HCT116 (cell line): ENCODE measurements at regions of chr20 and their contacts with region 1.

Region 1: GRCh38 chr20:5126512-5127203 is at the start of gene CDS2:
- DNase-seq: peak; percentile 97
- ATAC-seq: peak; percentile 90
- H3K4me3 ChIP-seq: peak within 1 kb of the TSS; percentile 64 to 87
- H3K27ac ChIP-seq: peak within 1 kb of the TSS; percentile 81
- H3K4me1 ChIP-seq: peaks cover 7 to 15% of the 10 kb centered on the region in 2 experiments; a peak in 3 of 4 replicates
- H3K27me3 ChIP-seq: no peaks in the 10 kb centered on the region
- CTCF ChIP-seq: peak; percentile 47 to 73 (median 49)
- POLR2A ChIP-seq: no peak
- RAD21 ChIP-seq: peak; percentile 72
- total RNA-seq, gene CDS2: 37.5 TPM

Region 2: DNA sequence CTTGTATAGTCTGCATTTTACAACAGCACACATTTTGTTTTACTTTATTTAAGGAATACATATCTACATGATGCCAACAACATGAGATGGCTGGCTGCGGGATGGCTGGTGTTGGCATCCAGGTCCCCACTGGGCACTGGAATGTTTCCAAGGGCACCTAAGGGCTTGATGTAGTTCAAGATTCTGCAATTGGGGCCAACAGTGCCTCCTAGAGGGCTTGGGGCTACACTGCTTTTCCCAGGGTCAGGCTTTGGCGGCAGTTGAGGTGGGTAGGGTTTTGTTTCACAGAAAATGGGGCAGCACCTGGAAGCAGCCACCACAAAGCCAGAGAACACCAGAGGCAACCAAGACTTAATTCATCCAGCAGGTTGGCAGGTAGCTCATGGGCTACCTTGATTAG is 607.1 kb before region 1 on chr20:
- CTCF ChIA-PET with region 1: no interaction called
- POLR2A ChIA-PET with region 1: no interaction called
- RAD21 ChIA-PET with region 1: no interaction called
- intact Hi-C with region 1: no loop called
- DNase-seq: no peak
- ATAC-seq: peak; percentile 85
- H3K4me3 ChIP-seq: no peak overlapping the region
- H3K27ac ChIP-seq: no peak overlapping the region
- H3K4me1 ChIP-seq: peaks cover 5 to 7% of the 10 kb centered on the region in 2 experiments
- H3K27me3 ChIP-seq: peaks cover 11% of the 10 kb centered on the region; the same call in 1 of the 2 replicates
- CTCF ChIP-seq: peak; percentile 36 to 78 (median 75); a peak in 5 of 6 replicates
- POLR2A ChIP-seq: no peak
- RAD21 ChIP-seq: peak; percentile 65

Region 3: GRCh38 chr20:5114403-5114802 is 12.3 kb before region 1 on chr20:
- CTCF ChIA-PET with region 1: interaction called, 13 read pairs
- POLR2A ChIA-PET with region 1: no interaction called
- RAD21 ChIA-PET with region 1: interaction called in 1 of 2 experiments, 3 read pairs
- intact Hi-C with region 1: no loop called
- DNase-seq: no peak
- ATAC-seq: no peak
- H3K4me3 ChIP-seq: peak overlapping the region in 1 of 2 experiments; percentile 87; a peak in 1 of 4 replicates
- H3K27ac ChIP-seq: no peak overlapping the region
- H3K4me1 ChIP-seq: peaks cover 12 to 35% of the 10 kb centered on the region in 2 experiments
- H3K27me3 ChIP-seq: no peaks in the 10 kb centered on the region
- CTCF ChIP-seq: no peak
- POLR2A ChIP-seq: no peak
- RAD21 ChIP-seq: no peak

Region 4: GRCh38 chr20:5153612-5154542 is 27.2 kb after region 1 on chr20:
- CTCF ChIA-PET with region 1: interaction called, 8 read pairs
- POLR2A ChIA-PET with region 1: interaction called, 10 read pairs
- RAD21 ChIA-PET with region 1: interaction called in 1 of 2 experiments, 4 read pairs
- intact Hi-C with region 1: no loop called
- DNase-seq: peak; percentile 63
- ATAC-seq: peak; percentile 86
- H3K4me3 ChIP-seq: peak overlapping the region in 1 of 2 experiments; percentile 31; a peak in 2 of 4 replicates
- H3K27ac ChIP-seq: peak overlapping the region; percentile 39; the same call in 1 of the 2 replicates
- H3K4me1 ChIP-seq: peaks cover 36 to 89% of the 10 kb centered on the region in 2 experiments
- H3K27me3 ChIP-seq: no peaks in the 10 kb centered on the region
- CTCF ChIP-seq: peak in 2 of 3 experiments; percentile 29 to 34; a peak in 3 of 6 replicates
- POLR2A ChIP-seq: no peak
- RAD21 ChIP-seq: no peak

Region 5: DNA sequence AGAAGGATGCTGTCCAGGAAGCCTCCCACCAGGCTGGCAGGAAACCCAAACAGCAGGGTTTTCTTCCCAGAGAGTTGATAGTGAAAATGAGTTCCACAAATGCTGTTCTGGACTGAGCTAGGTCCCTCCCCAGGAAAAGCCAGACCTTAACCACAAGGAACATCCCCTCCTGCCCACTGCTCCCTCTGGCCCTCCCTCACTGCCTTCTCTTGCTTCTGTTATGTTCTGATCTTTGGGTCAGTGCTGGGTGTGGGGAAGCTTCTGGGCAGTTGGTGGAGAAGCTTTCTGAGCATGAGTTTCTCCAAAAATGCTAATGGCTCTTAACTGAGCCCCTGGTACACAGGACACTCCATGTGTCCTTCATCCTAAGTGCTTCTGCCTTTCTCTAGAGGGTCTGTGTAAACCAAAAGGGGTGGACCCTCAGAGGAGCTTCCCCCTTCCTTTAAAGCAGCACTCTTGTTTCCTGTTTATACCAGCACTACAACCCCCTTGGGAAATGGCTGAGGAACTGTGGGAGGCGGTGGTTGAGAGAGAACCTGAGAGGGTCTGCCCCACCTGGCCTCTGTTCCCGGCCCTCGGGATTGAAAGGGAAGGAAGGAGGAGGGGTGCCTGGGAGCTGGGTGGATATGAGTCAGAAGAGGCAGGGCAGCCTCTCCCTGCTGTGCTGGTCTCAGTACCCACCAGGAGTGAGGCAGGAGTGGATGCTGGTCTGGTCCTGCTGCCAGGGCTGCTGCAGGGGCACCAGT is 42.2 kb after region 1 on chr20:
- CTCF ChIA-PET with region 1: interaction called, 12 read pairs
- POLR2A ChIA-PET with region 1: interaction called, 7 read pairs
- RAD21 ChIA-PET with region 1: interaction called, 4 to 5 read pairs
- intact Hi-C with region 1: no loop called
- DNase-seq: no peak
- ATAC-seq: peak; percentile 96
- H3K4me3 ChIP-seq: peak overlapping the region in 1 of 2 experiments; percentile 42; a peak in 2 of 4 replicates
- H3K27ac ChIP-seq: no peak overlapping the region
- H3K4me1 ChIP-seq: peaks cover 14 to 18% of the 10 kb centered on the region in 2 experiments
- H3K27me3 ChIP-seq: no peaks in the 10 kb centered on the region
- CTCF ChIP-seq: no peak
- POLR2A ChIP-seq: no peak
- RAD21 ChIP-seq: no peak

Region 6: DNA sequence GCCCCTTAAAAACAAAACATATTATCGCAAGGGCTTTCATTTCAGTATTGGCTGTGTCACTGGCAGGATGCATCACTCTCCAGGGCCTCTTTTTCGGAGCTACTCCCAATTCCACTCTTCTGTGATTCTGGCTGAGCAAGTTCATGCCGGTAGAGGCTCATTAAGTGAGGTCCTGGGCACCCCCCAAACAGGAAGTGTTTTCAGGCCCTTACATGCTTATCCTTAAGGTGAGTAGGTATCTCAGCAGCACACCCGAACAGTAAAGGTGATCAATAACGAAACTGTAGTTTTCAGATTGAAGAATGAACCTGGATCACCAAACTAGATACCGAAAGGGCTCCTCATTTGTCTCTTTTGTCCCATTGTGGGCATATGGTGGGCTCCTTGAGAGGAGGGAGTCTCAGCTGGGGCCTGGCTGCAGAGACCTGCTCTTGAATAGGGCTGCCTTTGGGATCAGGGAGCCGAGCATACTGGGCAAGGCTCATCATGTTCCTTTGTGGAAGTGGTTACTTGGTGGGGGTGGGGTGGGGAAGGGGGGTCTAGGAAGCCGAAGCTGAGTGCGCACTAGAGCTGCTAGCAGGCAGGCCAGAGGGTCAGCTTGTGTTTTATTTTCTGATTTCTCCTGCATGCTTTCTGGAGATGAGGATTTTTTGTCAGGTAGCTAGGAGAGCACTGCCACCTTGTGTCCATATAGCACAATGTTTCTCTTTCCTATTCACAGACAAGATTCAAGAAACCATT is 65.3 kb after region 1 on chr20:
- CTCF ChIA-PET with region 1: interaction called, 116 read pairs
- POLR2A ChIA-PET with region 1: interaction called, 13 read pairs
- RAD21 ChIA-PET with region 1: interaction called, 21 read pairs
- intact Hi-C with region 1: loop called (anchors 1 kb)
- DNase-seq: peak; percentile 51
- ATAC-seq: peak; percentile 82
- H3K4me3 ChIP-seq: no peak overlapping the region
- H3K27ac ChIP-seq: peak overlapping the region; percentile 15; the same call in 1 of the 2 replicates
- H3K4me1 ChIP-seq: no peaks in the 10 kb centered on the region
- H3K27me3 ChIP-seq: no peaks in the 10 kb centered on the region
- CTCF ChIP-seq: peak; percentile 66 to 85 (median 74)
- POLR2A ChIP-seq: no peak
- RAD21 ChIP-seq: peak; percentile 93

Region 7: GRCh38 chr20:5205348-5206210 is 78.9 kb after region 1 on chr20:
- CTCF ChIA-PET with region 1: interaction called, 12 read pairs
- POLR2A ChIA-PET with region 1: no interaction called
- RAD21 ChIA-PET with region 1: no interaction called
- intact Hi-C with region 1: no loop called
- DNase-seq: peak; percentile 33
- ATAC-seq: peak; percentile 100
- H3K4me3 ChIP-seq: no peak overlapping the region
- H3K27ac ChIP-seq: no peak overlapping the region
- H3K4me1 ChIP-seq: no peaks in the 10 kb centered on the region
- H3K27me3 ChIP-seq: no peaks in the 10 kb centered on the region
- CTCF ChIP-seq: peak; percentile 71 to 95 (median 92); a peak in 5 of 6 replicates
- POLR2A ChIP-seq: no peak
- RAD21 ChIP-seq: peak; percentile 80

Region 8: GRCh38 chr20:5448449-5449118 is 321.9 kb after region 1 on chr20:
- CTCF ChIA-PET with region 1: interaction called, 14 read pairs
- POLR2A ChIA-PET with region 1: no interaction called
- RAD21 ChIA-PET with region 1: no interaction called
- intact Hi-C with region 1: no loop called
- DNase-seq: peak; percentile 38
- ATAC-seq: peak; percentile 91
- H3K4me3 ChIP-seq: no peak overlapping the region
- H3K27ac ChIP-seq: no peak overlapping the region
- H3K4me1 ChIP-seq: no peaks in the 10 kb centered on the region
- H3K27me3 ChIP-seq: peaks cover 4% of the 10 kb centered on the region; the same call in 1 of the 2 replicates
- CTCF ChIP-seq: peak; percentile 65 to 71 (median 68)
- POLR2A ChIP-seq: no peak
- RAD21 ChIP-seq: peak; percentile 74